Activated B cell treated with CpG ODN at 0.5 μM for 24 hours (primary cell): ENCODE measurements at regions of chr6 and their contacts with region 1.

Region 1: DNA sequence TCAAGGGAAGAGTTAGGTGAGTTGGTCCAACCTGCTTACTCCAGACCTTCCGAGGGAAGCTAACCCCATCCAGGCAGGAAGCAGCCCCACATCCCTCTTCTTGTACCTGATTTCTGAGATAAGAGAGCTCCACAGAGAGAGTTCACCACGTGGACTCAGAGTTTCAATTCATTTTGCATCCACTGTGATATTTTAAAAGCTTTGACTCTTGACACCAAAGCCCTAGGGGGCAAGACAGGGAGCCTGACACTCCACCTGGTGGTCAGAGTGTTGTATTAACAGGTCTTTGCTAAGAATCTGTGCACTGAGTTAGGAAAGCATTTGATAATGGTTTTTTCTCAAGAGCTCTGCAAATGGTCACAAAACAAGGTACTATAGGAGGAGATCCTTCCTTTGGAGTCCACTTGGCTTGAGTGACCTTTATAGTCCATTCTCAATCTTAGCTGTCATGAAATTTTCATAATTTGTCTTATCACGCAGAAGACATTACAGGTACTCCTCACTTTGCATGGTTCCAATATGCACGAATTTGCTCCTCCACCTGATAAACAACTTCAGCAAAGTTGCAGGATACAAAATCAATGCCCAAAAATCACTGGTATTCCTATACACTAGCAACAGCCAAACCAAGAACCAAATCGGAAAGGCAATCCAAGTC is 56.2 kb upstream of the RIPOR2 start:
- DNase-seq: peak; percentile 25
- ATAC-seq: peak; percentile 88
- H3K4me3 Mint-ChIP-seq: peak overlapping the region; percentile 55
- H3K27ac Mint-ChIP-seq: peak overlapping the region; percentile 74
- H3K4me1 Mint-ChIP-seq: peaks cover 83% of the 10 kb centered on the region
- H3K27me3 Mint-ChIP-seq: no peaks in the 10 kb centered on the region
- CTCF ChIP-seq: no peak

Region 2: DNA sequence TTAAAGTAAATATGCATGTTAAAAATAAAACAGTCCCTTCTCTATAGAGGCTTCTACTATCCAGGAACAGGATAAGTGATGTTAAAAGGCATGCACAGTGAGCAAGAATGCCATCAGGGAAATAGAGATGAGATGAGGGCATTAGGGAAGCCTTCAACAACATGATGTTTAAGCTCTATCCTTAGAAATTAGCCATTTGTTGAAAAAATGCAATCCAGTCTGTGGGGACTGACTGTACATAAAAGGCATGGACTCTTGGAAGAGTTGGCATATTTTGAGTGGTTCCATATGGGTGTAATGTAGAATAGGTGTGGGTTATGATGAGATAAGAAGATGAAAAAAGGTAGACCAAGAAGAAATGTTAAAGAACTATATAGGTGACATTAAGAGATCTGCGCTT is 351.8 kb before region 1 on chr6:
- CTCF ChIA-PET with region 1: no interaction called
- POLR2A ChIA-PET with region 1: no interaction called
- intact Hi-C with region 1: no loop called
- DNase-seq: no peak
- ATAC-seq: no peak
- H3K4me3 Mint-ChIP-seq: no peak overlapping the region
- H3K27ac Mint-ChIP-seq: no peak overlapping the region
- H3K4me1 Mint-ChIP-seq: peaks cover 1% of the 10 kb centered on the region
- H3K27me3 Mint-ChIP-seq: peaks cover 9% of the 10 kb centered on the region
- CTCF ChIP-seq: no peak

Region 3: DNA sequence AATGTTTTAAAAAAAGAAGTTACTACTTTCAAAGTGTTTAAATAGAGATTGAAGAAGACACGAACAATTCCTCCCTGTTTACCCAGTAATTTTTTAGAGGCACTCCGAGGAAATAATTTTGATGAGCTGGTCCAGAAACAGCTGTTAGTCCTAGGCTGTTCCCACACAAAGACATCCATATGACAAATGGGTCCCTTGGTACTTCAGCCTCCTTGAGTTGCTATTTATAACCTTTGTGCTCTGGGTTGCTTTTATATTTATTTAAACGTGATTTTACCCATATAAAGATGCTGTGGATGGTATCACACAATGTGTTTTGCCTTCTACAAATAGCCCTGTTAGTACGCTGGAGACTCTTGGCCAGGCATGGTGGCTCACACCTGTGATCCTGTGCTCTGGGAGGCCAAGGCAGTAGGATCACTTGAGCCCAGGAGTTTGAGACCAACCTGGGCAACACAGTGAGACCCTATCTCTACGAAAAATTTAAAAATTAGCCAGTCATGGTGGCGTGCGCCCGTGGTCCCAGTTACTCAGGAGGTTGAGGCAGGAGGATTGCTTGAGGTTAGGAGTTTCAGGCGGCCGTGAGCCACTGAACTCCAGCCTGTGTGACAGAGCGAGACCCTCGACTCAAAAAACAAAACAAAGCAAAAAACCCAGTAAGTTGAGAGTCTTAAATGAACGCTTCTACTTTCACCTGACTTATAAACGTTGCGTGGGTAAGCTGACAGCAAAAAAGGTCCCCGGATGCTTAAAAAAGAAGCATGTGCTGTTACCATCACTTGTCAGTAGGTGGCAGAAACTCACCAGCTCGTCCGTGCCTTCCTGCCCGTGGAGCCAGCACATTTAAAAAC is 136.3 kb before region 1 on chr6:
- CTCF ChIA-PET with region 1: interaction called, 91 read pairs
- POLR2A ChIA-PET with region 1: interaction called, 8 read pairs
- intact Hi-C with region 1: loop called (anchors 1 kb)
- DNase-seq: no peak
- ATAC-seq: peak; percentile 66
- H3K4me3 Mint-ChIP-seq: no peak overlapping the region
- H3K27ac Mint-ChIP-seq: peak overlapping the region; percentile 81
- H3K4me1 Mint-ChIP-seq: peaks cover 63% of the 10 kb centered on the region
- H3K27me3 Mint-ChIP-seq: no peaks in the 10 kb centered on the region
- CTCF ChIP-seq: peak; percentile 58

Region 4: GRCh38 chr6:24891004-24891403 is 100.9 kb before region 1 on chr6:
- CTCF ChIA-PET with region 1: interaction called, 16 read pairs
- POLR2A ChIA-PET with region 1: no interaction called
- intact Hi-C with region 1: no loop called
- DNase-seq: no peak
- ATAC-seq: peak; percentile 49
- H3K4me3 Mint-ChIP-seq: peak overlapping the region; percentile 13
- H3K27ac Mint-ChIP-seq: peak overlapping the region; percentile 80
- H3K4me1 Mint-ChIP-seq: peaks cover 90% of the 10 kb centered on the region
- H3K27me3 Mint-ChIP-seq: no peaks in the 10 kb centered on the region
- CTCF ChIP-seq: no peak

Region 5: GRCh38 chr6:24933868-24934401 is 58.0 kb before region 1 on chr6:
- CTCF ChIA-PET with region 1: interaction called, 113 read pairs
- POLR2A ChIA-PET with region 1: interaction called, 59 read pairs
- intact Hi-C with region 1: loop called (anchors 1 kb)
- DNase-seq: no peak
- ATAC-seq: no peak
- H3K4me3 Mint-ChIP-seq: peak overlapping the region; percentile 91
- H3K27ac Mint-ChIP-seq: peak overlapping the region; percentile 91
- H3K4me1 Mint-ChIP-seq: peaks cover 97% of the 10 kb centered on the region
- H3K27me3 Mint-ChIP-seq: no peaks in the 10 kb centered on the region
- CTCF ChIP-seq: peak; percentile 32

Region 6: GRCh38 chr6:24974182-24975171 is 17.5 kb before region 1 on chr6:
- CTCF ChIA-PET with region 1: interaction called, 19 read pairs
- POLR2A ChIA-PET with region 1: no interaction called
- intact Hi-C with region 1: loop called (anchors 2 kb)
- DNase-seq: no peak
- ATAC-seq: peak; percentile 81
- H3K4me3 Mint-ChIP-seq: peak overlapping the region; percentile 64
- H3K27ac Mint-ChIP-seq: peak overlapping the region; percentile 89
- H3K4me1 Mint-ChIP-seq: peaks cover 80% of the 10 kb centered on the region
- H3K27me3 Mint-ChIP-seq: no peaks in the 10 kb centered on the region
- CTCF ChIP-seq: no peak

Region 7: DNA sequence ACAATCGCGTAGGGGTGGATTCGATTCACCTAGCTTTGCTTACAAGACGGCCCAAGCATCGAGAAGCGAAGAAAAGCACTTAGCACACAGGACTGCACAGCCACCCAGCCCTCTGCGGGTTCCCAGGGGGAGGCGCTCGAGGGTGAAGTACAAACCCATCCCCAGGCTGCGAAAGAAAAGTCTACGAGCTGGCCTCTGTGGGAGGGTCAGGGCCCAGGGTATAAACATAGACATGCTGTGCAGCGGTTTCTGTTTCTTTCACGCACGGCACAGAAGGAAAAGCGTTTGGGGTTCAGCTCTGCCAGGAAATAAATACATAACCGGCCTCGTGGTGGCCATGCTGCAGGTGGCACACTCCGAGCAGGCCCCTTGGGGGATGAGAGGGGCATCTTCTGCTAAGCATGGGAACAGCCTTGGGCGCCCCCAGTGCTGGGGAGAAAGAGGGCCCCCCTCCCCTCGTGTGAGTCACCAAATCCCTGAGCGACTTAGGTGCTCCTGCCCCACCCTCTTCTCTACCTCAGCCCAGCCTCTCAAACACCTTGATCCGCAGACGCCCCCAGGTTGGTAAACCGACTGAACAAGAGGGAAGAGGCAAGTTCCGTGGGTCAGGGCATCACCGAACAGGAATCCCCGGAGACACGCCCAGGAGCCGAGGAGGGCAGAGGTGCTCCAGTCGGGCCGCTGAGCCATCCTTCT is 35.4 kb after region 1 on chr6:
- CTCF ChIA-PET with region 1: interaction called, 18 read pairs
- POLR2A ChIA-PET with region 1: interaction called, 4 read pairs
- intact Hi-C with region 1: no loop called
- DNase-seq: peak; percentile 59
- ATAC-seq: peak; percentile 90
- H3K4me3 Mint-ChIP-seq: peak overlapping the region; percentile 77
- H3K27ac Mint-ChIP-seq: peak overlapping the region; percentile 83
- H3K4me1 Mint-ChIP-seq: peaks cover 58% of the 10 kb centered on the region
- H3K27me3 Mint-ChIP-seq: no peaks in the 10 kb centered on the region
- CTCF ChIP-seq: no peak

Region 8: DNA sequence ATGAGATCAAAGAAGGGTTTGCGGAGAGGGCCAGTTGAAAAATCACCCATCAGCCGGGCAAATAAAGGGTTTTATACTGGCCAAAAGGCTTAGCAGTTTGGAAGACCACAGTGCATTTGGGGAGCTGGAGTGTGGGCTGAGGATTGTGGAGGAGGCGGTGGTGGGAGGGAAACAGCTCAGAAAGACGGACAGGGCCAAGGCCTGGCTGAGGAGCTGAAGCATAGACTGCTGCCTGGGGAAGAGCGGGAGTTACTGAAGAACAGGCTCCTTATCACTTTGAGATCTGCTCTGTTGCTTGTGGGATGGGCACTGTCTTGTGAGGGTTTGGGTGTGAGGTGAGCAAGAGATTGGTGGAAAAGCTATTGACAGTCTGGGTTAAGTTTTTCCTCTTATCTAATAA is 431.5 kb after region 1 on chr6:
- CTCF ChIA-PET with region 1: no interaction called
- POLR2A ChIA-PET with region 1: no interaction called
- intact Hi-C with region 1: no loop called
- DNase-seq: no peak
- ATAC-seq: no peak
- H3K4me3 Mint-ChIP-seq: no peak overlapping the region
- H3K27ac Mint-ChIP-seq: no peak overlapping the region
- H3K4me1 Mint-ChIP-seq: no peaks in the 10 kb centered on the region
- H3K27me3 Mint-ChIP-seq: no peaks in the 10 kb centered on the region
- CTCF ChIP-seq: no peak